ENCODE measurements at regions of chr11 and their contacts with region 1.

Region 1: GRCh38 chr11:130131961-130132850 is 27.4 kb upstream of the ST14 start:
- DNase-seq: peak in 1 of 42 donors; percentile 33

Region 2: DNA sequence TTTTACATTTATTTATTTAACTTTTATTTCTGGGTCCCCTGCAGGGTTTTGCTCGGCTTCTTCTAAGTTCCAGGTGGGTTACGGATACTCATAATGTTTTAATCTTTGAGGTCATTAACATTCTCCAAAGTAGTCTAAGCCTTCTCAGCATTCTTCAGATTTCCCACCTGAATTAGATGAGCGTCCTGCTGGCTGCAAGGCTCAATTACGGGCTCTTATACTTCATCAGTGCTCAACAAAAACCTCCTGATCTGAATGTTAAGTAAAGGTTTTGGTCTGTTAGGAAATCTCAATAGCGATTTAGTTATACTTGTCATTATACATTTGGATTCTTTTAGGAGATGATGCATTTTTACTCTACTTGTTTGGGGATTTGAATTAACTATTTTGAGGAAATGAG is 209.5 kb before region 1 on chr11:
- intact Hi-C with region 1: loop called (anchors 5 kb)
- DNase-seq: no peak

Region 3: GRCh38 chr11:129973068-129973467 is 159.1 kb before region 1 on chr11:
- intact Hi-C with region 1: no loop called
- DNase-seq: no peak

Region 4: GRCh38 chr11:130069684-130070108 is 62.5 kb before region 1 on chr11 and contains the start of gene APLP2:
- intact Hi-C with region 1: no loop called
- DNase-seq: peak; percentile 96 to 100 (median 99)